ENCODE measurements at regions of chr9 and their contacts with region 1.

Region 1: DNA sequence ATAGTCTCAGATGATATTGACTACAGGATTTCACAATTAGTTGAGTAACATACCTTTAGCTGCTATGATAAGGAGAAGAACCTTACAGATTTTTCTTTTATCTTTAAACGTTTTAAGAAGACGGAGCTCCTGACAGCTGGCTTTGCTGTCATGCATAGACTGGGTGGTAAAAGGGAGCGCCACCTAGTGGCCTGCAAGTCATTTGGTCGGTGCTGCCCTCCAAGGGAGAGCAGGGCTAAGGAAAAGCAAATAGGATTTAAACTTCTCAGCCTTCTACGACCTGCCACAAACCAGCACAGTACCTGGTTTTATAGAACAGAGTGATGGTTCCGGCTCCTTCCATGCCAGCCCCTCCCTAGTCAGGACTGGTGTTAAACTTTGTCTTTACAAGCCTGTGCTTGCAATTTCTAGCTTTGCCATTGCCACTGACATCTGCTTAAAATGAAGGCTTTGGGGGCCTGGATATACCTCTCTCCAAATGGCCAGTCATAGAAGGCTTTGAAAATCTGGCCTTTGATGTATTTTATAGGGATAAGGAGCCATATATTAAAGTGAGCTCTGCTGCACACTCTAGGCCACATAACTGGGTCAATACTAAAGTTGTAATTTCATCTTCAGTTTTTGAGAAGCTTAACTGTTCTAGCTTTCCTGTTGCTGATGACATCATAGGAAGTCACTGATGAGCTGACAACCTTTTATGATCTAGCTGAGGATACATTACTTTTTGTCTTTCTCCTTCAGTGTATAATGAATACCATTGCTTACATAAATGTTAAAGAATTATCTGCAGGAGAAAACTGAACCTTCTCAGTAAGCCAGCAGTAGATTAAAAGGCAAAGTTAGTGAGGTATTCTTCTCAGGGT is 31.1 kb upstream of the ADAMTSL1 start:
- DNase-seq: peak; percentile 70
- ATAC-seq: peak; percentile 77

Region 2: DNA sequence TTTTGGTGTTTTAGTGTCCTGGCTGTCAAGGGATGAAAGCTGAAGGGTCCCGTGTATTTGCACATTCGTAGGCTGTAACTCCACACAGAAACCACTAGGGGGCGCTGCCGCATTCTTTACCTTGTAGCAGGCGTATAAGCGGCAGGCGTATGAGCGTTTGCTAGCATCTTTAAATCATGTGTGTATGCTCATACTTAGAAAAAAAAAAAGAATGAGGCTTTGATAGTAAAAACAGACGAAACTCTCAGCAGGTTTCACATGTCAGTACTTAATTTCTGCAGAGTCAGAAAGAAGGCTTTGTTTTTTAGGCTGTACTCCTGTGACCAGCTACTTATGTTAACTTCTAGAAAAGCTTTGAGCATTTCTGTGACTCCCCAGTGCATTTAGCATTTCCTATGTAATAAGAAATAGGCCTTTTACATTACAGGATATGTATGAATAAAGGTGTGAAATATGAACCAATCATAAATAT is 187.7 kb before region 1 on chr9:
- intact Hi-C with region 1: loop called (anchors 2 kb)
- DNase-seq: peak; percentile 87
- ATAC-seq: peak; percentile 81

Region 3: GRCh38 chr9:18362901-18363685 is 79.8 kb before region 1 on chr9:
- intact Hi-C with region 1: loop called (anchors 5 kb)
- DNase-seq: no peak
- ATAC-seq: peak; percentile 90

Region 4: GRCh38 chr9:19028835-19029451 is 586.1 kb after region 1 on chr9:
- intact Hi-C with region 1: loop called (anchors 5 kb)
- DNase-seq: no peak
- ATAC-seq: peak; percentile 74

Measured in Right ventricle myocardium inferior (tissue), 1 donor.